ENCODE measurements at regions of chrX and their contacts with region 1.

Region 1: DNA sequence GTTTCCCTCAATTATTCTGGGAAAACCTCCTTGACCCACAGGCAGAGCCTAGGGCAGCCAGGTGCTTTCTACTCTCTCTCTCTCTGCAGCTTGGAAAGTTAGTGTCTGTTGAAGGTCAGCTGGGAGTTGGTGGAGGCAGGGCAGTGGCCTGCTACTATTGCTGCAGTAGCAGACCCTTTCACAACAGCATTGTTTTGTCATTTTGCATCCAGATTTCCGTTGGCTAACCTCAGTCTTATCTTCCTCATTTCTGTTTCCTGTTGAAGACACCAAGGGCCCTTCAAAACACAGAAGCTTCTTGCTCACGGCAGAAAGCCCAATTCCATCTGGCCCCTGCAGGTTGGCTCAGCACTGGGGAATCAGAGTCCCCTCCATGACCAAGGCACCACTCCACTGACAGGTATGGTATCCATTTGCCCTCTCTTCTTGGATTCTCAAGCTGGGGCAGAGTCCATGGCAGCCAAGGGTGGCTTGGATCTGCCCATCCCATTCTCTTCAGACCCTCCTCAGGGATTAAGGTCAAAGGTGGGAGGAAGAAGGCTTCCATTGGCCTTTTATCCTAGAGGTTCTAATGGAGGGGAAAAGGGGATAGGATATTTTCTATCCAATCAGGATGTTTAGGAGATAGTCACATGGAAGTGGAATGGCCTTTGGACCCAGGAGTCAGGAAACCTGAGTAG is 24.6 kb downstream of the VSIG4 start:
- DNase-seq: peak; percentile 74
- ATAC-seq: peak; percentile 69
- H3K4me3 ChIP-seq: peak overlapping the region; percentile 64 to 89 (median 75)
- H3K4me3 Mint-ChIP-seq: peak overlapping the region; percentile 75
- H3K27ac ChIP-seq: peak overlapping the region; percentile 72 to 80
- H3K27ac Mint-ChIP-seq: peak overlapping the region; percentile 90
- H3K4me1 ChIP-seq: peaks cover 83 to 99% of the 10 kb centered on the region in 2 donors
- H3K4me1 Mint-ChIP-seq: peaks cover 80% of the 10 kb centered on the region
- H3K27me3 ChIP-seq: no peaks in the 10 kb centered on the region
- H3K27me3 Mint-ChIP-seq: no peaks in the 10 kb centered on the region
- CTCF ChIP-seq: no peak

Region 2: DNA sequence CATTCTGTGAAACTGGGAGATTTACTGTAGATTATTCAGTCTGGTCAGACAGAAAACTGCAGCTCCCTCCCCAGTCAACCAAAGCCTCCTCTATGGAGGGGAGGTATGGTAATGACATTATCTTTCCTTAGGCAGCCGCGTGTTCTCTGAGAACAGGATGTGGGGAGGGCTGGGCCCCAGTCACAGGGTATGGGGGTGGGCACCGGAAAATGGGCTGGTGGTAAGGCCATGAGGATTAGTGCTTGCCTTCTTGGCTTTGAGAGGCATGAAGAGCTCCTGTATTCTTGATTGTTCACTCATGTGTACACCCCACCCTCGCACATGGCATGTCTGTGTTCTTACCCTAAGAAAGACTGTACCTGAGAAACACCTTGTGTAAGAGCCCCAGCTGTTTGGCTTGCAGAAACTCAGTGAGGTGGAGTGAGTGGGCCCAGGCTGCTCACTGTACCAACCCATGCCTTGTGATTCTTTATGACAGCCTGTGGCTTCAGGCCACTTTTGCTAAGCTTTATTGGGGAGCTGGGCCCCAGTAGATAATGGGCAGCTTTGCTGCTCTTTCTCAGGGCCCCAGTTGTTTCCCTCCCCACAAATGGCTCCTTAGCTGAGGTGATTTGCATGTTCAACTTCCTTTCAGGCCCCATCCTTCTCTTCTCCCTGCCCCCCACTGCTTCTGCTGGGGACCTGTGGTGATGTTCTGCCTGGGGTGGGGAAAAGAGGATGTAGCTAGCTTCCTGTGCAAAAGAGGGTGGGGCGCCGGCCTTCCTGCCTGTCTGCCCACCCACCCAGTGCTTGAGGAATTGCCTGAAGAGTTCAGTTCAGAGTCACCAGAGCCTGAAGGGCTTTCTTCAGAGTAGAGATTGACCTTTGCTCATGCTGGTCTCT is 317.1 kb before region 1 on chrX:
- CTCF ChIA-PET with region 1: interaction called, 4 read pairs
- POLR2A ChIA-PET with region 1: no interaction called
- intact Hi-C with region 1: loop called (anchors 5 kb)
- DNase-seq: peak; percentile 83
- ATAC-seq: peak; percentile 63
- H3K4me3 ChIP-seq: peak overlapping the region; percentile 13 to 38 (median 21)
- H3K4me3 Mint-ChIP-seq: peak overlapping the region; percentile 80
- H3K27ac ChIP-seq: peak overlapping the region; percentile 83 to 90
- H3K27ac Mint-ChIP-seq: peak overlapping the region; percentile 92
- H3K4me1 ChIP-seq: peaks cover 86 to 96% of the 10 kb centered on the region in 2 donors
- H3K4me1 Mint-ChIP-seq: peaks cover 83% of the 10 kb centered on the region
- H3K27me3 ChIP-seq: no peaks in the 10 kb centered on the region
- H3K27me3 Mint-ChIP-seq: no peaks in the 10 kb centered on the region
- CTCF ChIP-seq: no peak

Region 3: DNA sequence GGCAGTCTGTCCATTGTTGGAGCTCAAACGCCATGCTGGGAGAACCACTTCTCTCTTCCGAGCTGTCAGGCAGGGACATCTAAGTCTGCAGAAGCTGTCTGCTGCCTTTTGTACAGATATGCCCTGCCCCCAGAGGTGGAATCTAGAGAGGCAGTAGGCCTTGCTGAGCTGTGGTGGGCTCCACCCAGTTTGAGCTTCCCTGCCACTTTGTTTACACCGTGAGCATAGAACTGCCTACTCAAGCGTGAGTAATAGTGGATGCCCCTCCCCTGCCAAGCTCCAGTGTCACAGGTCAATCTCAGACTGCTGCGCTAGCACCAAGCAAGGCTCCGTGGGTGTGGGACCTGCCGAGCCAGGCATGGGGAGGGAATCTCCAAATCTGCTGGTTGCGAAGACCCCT is 121.2 kb before region 1 on chrX:
- CTCF ChIA-PET with region 1: no interaction called
- POLR2A ChIA-PET with region 1: no interaction called
- intact Hi-C with region 1: loop called (anchors 10 kb)
- DNase-seq: peak; percentile 56
- ATAC-seq: peak; percentile 86
- H3K4me3 ChIP-seq: peak overlapping the region in 2 of 5 experiments; percentile 17 to 19
- H3K4me3 Mint-ChIP-seq: peak overlapping the region; percentile 70
- H3K27ac ChIP-seq: peak overlapping the region in 1 of 2 donors; percentile 40
- H3K27ac Mint-ChIP-seq: peak overlapping the region; percentile 77
- H3K4me1 ChIP-seq: peaks cover 15 to 24% of the 10 kb centered on the region in 2 donors
- H3K4me1 Mint-ChIP-seq: peaks cover 36% of the 10 kb centered on the region
- H3K27me3 ChIP-seq: no peaks in the 10 kb centered on the region
- H3K27me3 Mint-ChIP-seq: no peaks in the 10 kb centered on the region
- CTCF ChIP-seq: no peak

Region 4: DNA sequence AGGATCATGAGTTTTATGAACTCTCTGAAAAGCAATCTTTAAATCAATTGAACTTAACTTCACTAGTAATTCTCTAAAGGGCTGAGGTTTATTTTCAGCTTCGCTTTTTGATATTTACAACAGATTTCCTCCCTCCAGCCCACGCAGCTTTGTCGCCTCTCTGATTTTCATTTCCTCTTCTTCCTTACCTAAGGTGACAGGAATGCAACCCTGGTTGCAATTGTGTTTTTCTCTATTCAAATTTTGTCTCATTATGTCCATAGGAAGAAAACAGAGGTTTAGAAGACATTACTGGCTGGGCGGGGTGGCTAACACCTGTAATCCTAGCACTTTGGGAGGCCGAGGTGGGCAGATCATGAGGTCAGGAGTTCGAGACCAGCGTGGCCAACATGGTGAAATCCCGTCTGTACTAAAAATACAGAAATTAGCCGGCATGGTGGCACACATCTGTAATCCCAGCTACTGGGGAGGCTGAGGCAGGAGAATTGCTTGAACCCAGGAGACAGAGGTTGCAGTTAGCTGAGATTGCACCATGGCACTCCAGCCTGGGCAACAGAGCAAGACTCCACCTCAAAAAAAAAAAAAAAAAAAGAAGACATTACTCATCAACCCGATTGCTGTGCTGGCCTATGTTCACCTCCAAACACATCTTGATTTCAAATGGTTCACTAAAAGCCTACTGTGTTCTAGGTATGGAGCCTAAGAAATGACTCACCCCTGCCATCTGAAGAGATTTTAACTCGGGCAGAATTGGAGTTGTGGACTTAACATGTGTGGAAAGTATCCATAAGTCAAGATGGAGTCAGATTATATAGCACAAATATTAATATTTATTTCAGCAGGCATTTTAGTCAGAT is 12.2 kb before region 1 on chrX:
- CTCF ChIA-PET with region 1: interaction called, 4 read pairs
- POLR2A ChIA-PET with region 1: interaction called, 5 read pairs
- intact Hi-C with region 1: loop called (anchors 1 kb)
- DNase-seq: peak; percentile 49
- ATAC-seq: peak; percentile 72
- H3K4me3 ChIP-seq: no peak overlapping the region
- H3K4me3 Mint-ChIP-seq: peak overlapping the region; percentile 74
- H3K27ac ChIP-seq: peak overlapping the region; percentile 44 to 70
- H3K27ac Mint-ChIP-seq: peak overlapping the region; percentile 90
- H3K4me1 ChIP-seq: peaks cover 78 to 86% of the 10 kb centered on the region in 2 donors
- H3K4me1 Mint-ChIP-seq: peaks cover 88% of the 10 kb centered on the region
- H3K27me3 ChIP-seq: no peaks in the 10 kb centered on the region
- H3K27me3 Mint-ChIP-seq: no peaks in the 10 kb centered on the region
- CTCF ChIP-seq: no peak